SK-N-SH (cell line): ENCODE measurements at regions of chr12 and their contacts with region 1.

Region 1: GRCh38 chr12:122860346-122861090 is 25.3 kb downstream of the HIP1R start:
- DNase-seq: peak; percentile 89
- H3K4me3 ChIP-seq: peak overlapping the region in 1 of 2 experiments; percentile 44; a peak in 1 of 4 replicates
- H3K27ac ChIP-seq: no peak overlapping the region; a peak in 1 of 4 replicates
- H3K4me1 ChIP-seq: peaks cover 0 to 22% of the 10 kb centered on the region in 2 experiments; a peak in 1 of 4 replicates
- H3K27me3 ChIP-seq: no peaks in the 10 kb centered on the region
- CTCF ChIP-seq: peak; percentile 85
- EP300 ChIP-seq: no peak
- RAD21 ChIP-seq: peak; percentile 92

Region 2: GRCh38 chr12:122841544-122842321 is 18.8 kb before region 1 on chr12:
- CTCF ChIA-PET with region 1: interaction called, 45 read pairs
- POLR2A ChIA-PET with region 1: interaction called, 3 read pairs
- DNase-seq: peak; percentile 55
- H3K4me3 ChIP-seq: no peak overlapping the region
- H3K27ac ChIP-seq: peak overlapping the region; percentile 49 to 77
- H3K4me1 ChIP-seq: peaks cover 14 to 66% of the 10 kb centered on the region in 2 experiments
- H3K27me3 ChIP-seq: no peaks in the 10 kb centered on the region
- CTCF ChIP-seq: no peak
- EP300 ChIP-seq: no peak
- RAD21 ChIP-seq: no peak

Region 3: GRCh38 chr12:122871851-122872780 is 11.6 kb after region 1 on chr12:
- CTCF ChIA-PET with region 1: interaction called, 50 read pairs
- POLR2A ChIA-PET with region 1: no interaction called
- DNase-seq: peak; percentile 74
- H3K4me3 ChIP-seq: no peak overlapping the region
- H3K27ac ChIP-seq: peak overlapping the region; percentile 38 to 92; a peak in 3 of 4 replicates
- H3K4me1 ChIP-seq: peaks cover 20 to 51% of the 10 kb centered on the region in 2 experiments; a peak in 3 of 4 replicates
- H3K27me3 ChIP-seq: no peaks in the 10 kb centered on the region
- CTCF ChIP-seq: no peak
- EP300 ChIP-seq: no peak
- RAD21 ChIP-seq: no peak

Region 4: DNA sequence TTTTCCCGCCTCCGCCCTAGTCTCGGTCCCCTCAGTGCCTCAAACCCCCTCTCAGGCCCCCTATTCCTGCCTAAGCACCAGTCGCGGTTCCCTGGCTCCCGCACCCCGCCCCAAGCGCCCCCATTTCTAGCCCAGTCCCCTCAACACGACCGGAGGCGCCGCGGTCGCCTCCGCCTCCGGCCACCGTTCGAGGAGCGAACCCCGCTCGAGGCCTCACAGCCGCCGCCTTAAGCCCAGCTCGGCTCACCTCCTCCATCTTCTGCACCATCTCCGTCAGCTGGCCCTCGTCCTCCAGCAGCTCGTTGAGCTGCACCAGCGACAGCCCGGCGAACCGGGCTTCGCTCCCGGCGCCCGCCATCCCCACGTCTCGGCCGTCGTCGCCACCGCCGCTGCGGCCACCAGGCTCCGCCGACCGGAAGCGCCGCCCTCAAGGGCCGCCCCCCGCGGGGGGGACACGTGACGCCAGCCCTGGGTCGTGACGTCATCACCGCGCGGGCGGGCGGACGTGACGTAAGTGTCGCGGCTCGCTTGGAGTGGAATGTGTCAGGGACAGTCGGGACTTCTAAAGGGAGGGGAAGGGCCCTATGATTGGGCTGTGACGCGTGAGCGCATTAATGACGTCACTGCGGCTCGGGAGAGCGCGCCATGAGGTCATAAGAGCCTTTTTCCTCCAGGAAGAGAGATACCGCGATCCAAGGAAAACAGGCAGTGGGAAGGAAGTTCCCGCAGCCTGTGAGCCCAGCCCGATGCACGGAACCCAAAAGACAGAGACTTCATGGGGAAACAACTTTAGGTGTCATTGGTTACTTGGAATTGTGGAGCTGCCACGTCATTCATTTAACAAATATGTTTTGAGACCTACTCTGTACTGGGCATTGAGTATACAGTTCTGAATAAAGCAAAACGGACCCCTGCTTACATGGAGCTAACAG is 35.5 kb after region 1 on chr12 and contains the start of gene VPS37B:
- CTCF ChIA-PET with region 1: interaction called, 11 read pairs
- POLR2A ChIA-PET with region 1: no interaction called
- DNase-seq: peak; percentile 99
- H3K4me3 ChIP-seq: peak within 1 kb of the TSS; percentile 80 to 81
- H3K27ac ChIP-seq: peak within 1 kb of the TSS; percentile 47 to 52; a peak in 2 of 4 replicates
- H3K4me1 ChIP-seq: peaks cover 11 to 20% of the 10 kb centered on the region in 2 experiments; a peak in 3 of 4 replicates
- H3K27me3 ChIP-seq: no peaks in the 10 kb centered on the region
- CTCF ChIP-seq: no peak
- EP300 ChIP-seq: peak; percentile 3 to 37; a peak in 1 of 4 replicates
- RAD21 ChIP-seq: no peak
- polyA plus RNA-seq, gene VPS37B: 20.9 and 41.1 TPM in 2 replicates

Region 5: GRCh38 chr12:122965851-122966722 is 105.6 kb after region 1 on chr12 and contains the start of gene ABCB9:
- CTCF ChIA-PET with region 1: interaction called, 11 read pairs
- POLR2A ChIA-PET with region 1: interaction called, 4 read pairs
- DNase-seq: peak; percentile 99
- H3K4me3 ChIP-seq: peak within 1 kb of the TSS; percentile 73 to 90
- H3K27ac ChIP-seq: peak within 1 kb of the TSS in 1 of 2 experiments; percentile 45; a peak in 1 of 4 replicates
- H3K4me1 ChIP-seq: peaks cover 6 to 26% of the 10 kb centered on the region in 2 experiments; a peak in 2 of 4 replicates
- H3K27me3 ChIP-seq: no peaks in the 10 kb centered on the region
- CTCF ChIP-seq: no peak
- EP300 ChIP-seq: no peak
- RAD21 ChIP-seq: no peak
- polyA plus RNA-seq, gene ABCB9: 6.2 and 7.6 TPM in 2 replicates

Region 6: DNA sequence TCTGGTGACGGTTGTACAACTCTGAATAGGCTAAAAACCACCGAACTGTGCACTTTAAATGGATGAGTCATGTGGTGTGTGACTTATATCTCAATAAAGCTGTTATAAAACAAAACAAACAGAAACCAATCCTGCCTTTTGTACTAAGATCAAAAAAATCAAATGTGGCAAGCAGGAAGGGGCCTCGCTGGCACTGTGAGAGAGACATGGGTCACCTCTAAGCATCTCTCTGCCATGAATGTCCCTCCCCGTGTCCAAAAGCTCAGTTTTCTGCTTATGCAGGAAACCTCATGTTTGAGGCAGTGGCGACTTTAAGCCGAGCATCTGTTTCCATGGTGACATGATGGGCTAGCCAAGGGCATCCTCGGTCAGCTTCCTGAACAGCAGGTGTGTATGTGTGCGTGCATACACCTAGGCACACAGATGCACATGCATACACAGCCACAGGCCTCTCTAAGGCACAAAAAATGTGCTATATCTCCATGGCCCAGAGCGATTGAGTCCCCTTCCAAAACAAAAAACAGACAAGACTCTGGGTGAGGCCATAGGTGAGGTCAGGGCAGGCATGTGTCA is 164.4 kb after region 1 on chr12:
- CTCF ChIA-PET with region 1: no interaction called
- POLR2A ChIA-PET with region 1: no interaction called
- DNase-seq: no peak
- H3K4me3 ChIP-seq: no peak overlapping the region
- H3K27ac ChIP-seq: no peak overlapping the region
- H3K4me1 ChIP-seq: peaks cover 0 to 2% of the 10 kb centered on the region in 2 experiments; a peak in 1 of 4 replicates
- H3K27me3 ChIP-seq: no peaks in the 10 kb centered on the region
- CTCF ChIP-seq: no peak
- EP300 ChIP-seq: no peak
- RAD21 ChIP-seq: no peak

Region 7: DNA sequence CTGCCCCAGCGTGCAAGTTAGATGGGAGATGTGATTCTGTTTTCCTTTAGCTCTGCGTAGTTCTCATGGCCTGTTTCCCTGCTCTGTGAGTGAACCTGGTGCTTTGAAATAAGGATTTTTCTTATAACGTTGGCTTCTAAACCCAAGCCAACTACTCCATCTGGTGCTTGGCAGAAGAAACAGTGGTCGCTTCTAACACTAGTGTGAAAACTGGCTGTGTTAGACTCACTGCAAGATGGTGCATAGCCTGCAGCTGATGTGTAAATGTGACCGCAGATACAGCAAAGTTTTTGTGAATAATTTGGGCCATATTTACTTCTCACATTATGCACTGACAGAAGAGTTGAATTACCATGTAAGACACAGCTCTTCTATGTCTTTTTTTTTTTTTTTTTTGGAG is 785.4 kb after region 1 on chr12:
- CTCF ChIA-PET with region 1: no interaction called
- POLR2A ChIA-PET with region 1: no interaction called
- DNase-seq: no peak
- H3K4me3 ChIP-seq: no peak overlapping the region
- H3K27ac ChIP-seq: no peak overlapping the region
- H3K4me1 ChIP-seq: no peaks in the 10 kb centered on the region
- H3K27me3 ChIP-seq: no peaks in the 10 kb centered on the region
- CTCF ChIP-seq: no peak
- EP300 ChIP-seq: no peak
- RAD21 ChIP-seq: no peak